ENCODE measurements at regions of chr4 and their contacts with region 1.

Region 1: DNA sequence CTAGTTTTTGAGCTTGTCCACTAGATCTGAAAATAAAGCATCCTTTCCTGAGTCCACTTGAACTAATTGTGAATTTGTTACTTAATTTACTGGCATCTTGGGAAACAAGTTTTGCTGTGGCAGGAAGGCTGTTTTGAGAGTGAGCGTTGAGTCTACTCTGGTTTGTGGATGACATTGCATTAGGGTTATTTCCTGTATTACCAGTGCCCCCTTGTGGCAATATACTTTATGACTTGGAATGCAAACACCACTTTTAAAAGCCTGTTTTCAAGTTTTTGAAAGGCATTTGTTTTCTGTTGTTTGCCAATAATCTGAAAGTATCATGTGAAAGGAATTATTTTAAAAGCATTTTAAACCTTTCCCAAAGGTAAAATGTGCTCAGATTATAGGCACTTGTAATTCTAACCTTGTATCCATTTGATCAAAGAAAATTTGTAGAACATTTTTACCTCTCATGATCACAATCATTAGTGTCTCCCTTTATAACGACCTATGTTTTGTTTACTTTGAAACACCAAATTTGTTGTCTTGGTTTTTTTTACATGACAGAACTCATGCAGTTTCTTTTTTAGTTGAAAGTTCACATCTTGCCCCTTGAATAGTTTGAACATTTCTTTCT is 18.0 kb upstream of the CYP2U1 start:
- DNase-seq: peak; percentile 85
- H3K4me3 Mint-ChIP-seq: no peak overlapping the region
- H3K27ac Mint-ChIP-seq: no peak overlapping the region
- H3K4me1 Mint-ChIP-seq: no peaks in the 10 kb centered on the region
- H3K27me3 Mint-ChIP-seq: peaks cover 19% of the 10 kb centered on the region

Region 2: DNA sequence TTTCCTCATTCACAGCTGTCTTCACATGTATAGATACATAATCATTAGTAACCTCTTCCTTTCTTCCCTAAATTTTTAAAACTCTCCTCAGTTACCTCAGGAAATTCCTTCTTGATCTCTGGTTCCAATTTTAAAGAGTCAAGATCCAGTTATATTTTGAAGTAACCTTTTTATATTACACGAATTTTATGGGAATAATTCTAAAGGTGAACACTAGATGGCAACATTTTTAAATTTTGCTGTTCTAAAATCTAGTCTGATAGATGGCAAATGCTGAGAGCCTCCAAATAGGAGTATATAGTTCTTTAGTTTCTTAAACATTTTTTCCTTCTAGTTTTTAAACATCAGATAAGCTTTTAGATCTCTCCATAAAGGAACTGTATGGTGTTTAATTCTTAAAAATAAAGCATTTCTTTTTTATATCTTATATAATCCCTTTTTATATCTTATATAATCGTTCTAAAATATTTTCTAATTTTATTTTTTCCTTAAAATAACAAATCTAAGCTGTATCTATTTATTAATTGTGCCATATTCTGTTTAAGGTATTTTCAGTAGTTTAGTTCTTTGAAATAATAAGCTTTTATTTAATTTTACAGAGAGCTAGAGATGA is 155.4 kb before region 1 on chr4:
- intact Hi-C with region 1: loop called (anchors 1 kb)
- DNase-seq: no peak
- H3K4me3 Mint-ChIP-seq: no peak overlapping the region
- H3K27ac Mint-ChIP-seq: no peak overlapping the region
- H3K4me1 Mint-ChIP-seq: no peaks in the 10 kb centered on the region
- H3K27me3 Mint-ChIP-seq: peaks cover 6% of the 10 kb centered on the region

Region 3: DNA sequence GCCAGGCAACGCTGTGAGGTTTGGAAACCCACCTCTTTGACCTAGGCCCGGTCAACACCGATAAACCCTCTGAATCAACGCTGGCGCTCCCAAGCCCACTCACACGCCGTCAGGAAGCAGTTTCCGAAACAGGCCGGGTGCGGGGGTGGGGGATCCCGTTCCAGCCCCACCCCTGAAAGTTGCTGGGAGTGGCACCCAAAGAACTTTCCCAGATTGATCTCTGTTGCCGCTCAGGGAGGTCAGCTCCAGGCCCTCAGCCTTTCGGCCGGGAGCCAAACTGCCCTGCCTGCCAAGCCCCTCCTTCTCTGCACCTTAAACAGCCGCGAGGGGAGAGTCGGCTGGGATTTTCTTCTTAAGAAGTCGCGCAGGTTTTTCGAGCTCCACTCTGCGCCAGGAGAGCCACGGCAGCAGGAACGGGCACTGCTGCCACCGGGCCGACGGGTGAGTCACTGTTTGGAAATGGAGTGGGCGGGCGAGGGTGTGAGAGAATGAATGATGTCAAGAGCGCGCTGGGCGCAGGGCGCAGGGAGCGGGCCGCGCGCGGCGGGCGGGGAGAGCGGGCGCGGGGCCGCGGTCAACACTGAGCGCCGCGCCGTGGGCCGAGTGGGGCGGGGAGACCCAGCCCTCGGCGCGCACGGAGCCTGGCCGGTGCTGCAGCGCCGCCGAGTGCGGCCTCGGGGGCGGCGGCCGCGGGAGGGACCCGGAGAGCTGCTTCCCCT is 88.9 kb before region 1 on chr4 and contains the start of gene SGMS2:
- intact Hi-C with region 1: loop called (anchors 10 kb)
- DNase-seq: peak; percentile 76
- H3K4me3 Mint-ChIP-seq: peak within 1 kb of the TSS; percentile 85
- H3K27ac Mint-ChIP-seq: peak within 1 kb of the TSS; percentile 70
- H3K4me1 Mint-ChIP-seq: peaks cover 14% of the 10 kb centered on the region
- H3K27me3 Mint-ChIP-seq: peaks cover 65% of the 10 kb centered on the region
- total RNA-seq, gene SGMS2: 0.72 and 0.80 TPM in 2 replicates